ENCODE measurements at regions of chr11 and their contacts with region 1.

Region 1: DNA sequence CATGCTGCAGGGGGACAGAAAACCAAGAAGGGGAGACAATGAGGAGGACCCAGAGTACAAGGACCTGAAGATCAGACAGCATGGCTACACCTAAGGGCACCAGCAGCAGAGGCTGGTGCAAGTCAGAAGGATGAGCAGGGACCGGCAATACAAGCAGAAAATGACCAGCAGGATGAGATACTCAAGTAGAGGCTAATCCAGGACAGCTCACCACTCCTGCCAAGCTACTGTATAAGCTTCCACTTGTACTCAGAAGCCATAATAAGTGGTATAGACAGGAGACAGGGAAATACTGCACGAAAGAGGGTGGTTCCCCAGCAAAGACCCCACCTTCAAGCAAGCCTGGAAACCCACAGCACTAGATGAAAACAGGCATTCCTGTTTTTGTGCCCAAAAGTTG is 138.7 kb upstream of the ZC3H12C start:
- DNase-seq: no peak
- H3K4me3 ChIP-seq: no peak overlapping the region
- H3K27ac ChIP-seq: no peak overlapping the region
- H3K4me1 ChIP-seq: no peaks in the 10 kb centered on the region
- H3K27me3 ChIP-seq: no peaks in the 10 kb centered on the region
- CTCF ChIP-seq: no peak

Region 2: DNA sequence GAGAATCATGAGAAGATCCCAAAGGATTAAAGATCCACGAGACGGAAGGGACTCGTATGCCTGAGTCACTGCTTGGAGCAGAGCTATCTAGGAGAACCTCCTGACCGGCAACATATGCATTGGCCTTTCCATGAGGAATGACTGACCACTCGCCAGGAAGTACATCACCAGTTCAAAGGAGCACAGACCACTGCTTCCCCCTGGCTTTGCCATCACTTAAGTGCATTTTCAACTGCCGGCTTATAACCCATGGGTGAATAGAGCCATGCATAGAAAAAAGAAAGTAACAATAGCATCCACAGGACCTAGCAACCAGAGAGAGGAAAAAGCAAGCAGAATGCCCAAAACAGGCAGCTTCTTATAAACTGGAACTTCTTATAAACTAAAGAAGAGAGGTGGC is 40.4 kb after region 1 on chr11:
- CTCF ChIA-PET with region 1: no interaction called
- dilution Hi-C with region 1: loop called (anchors 5 kb)
- in situ Hi-C with region 1: no loop called
- intact Hi-C with region 1: no loop called
- DNase-seq: no peak
- H3K4me3 ChIP-seq: no peak overlapping the region
- H3K27ac ChIP-seq: no peak overlapping the region
- H3K4me1 ChIP-seq: no peaks in the 10 kb centered on the region
- H3K27me3 ChIP-seq: no peaks in the 10 kb centered on the region
- CTCF ChIP-seq: no peak

Region 3: DNA sequence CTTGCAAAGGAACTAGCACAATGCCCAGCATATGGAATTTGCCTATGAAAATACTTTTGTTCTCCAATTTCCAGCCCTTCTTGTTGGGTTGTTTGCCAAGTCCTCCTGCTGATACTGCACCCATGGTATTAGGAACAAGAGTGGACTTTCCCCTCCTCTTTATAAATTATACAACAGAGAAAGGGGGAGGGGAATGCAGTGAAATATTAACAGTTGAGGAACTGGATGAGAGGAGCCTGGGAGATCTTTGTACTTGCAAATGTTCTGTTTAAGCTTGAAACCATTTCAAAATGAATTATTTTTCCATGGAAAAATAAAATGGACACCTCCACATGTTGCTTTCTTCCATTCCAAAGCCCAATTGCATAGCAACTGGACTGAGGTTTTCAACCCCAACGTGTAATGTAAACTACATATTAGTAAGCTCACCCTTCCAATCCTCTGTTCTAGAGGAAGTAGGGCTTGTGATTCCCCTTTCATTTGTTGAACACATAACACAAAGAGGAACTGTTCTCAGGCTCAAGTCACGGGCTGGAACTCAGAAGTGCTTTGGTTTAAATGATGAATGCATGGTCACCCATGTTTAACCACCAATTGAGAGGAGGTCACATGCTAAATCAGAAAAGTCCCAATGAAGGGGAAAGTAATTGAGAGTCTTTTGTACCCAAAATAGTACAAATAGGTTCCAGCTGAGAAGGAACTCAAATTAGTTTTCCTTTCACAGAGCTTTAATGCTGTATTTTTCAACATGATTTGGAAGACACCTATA is 72.5 kb after region 1 on chr11:
- CTCF ChIA-PET with region 1: no interaction called
- dilution Hi-C with region 1: loop called (anchors 5 kb)
- in situ Hi-C with region 1: no loop called
- intact Hi-C with region 1: no loop called
- DNase-seq: no peak
- H3K4me3 ChIP-seq: no peak overlapping the region
- H3K27ac ChIP-seq: no peak overlapping the region
- H3K4me1 ChIP-seq: peaks cover 16% of the 10 kb centered on the region
- H3K27me3 ChIP-seq: no peaks in the 10 kb centered on the region
- CTCF ChIP-seq: no peak

Region 4: DNA sequence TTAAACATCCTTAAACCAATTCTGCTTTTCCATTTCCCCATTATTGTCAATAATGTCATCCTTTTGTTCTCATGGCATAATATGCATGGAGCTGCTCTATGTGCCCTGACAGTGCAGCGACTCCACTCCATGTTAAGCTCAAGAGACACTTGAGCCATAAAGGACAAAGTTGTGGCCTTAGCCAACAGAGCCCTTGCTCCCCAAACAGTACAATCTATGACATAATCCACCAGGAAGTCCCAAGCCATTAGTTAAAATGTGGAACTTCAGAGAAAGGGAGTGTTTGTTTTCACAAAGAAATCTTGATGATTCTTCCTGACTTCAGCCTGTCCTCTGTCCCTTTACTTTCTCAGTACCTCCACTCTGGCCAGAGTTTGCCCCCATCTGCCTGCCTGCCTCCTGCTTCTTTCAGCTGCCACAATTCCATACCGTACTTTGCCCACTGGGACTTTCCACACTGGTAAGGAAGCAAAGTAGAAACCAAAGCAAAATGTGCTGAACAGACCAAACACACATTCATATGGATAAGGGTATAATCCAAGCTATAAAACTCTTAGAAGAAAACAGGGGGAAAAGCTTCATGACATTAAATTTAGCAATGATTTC is 92.3 kb after region 1 on chr11:
- CTCF ChIA-PET with region 1: no interaction called
- dilution Hi-C with region 1: no loop called
- in situ Hi-C with region 1: no loop called
- intact Hi-C with region 1: no loop called
- DNase-seq: no peak
- H3K4me3 ChIP-seq: no peak overlapping the region
- H3K27ac ChIP-seq: no peak overlapping the region
- H3K4me1 ChIP-seq: no peaks in the 10 kb centered on the region
- H3K27me3 ChIP-seq: no peaks in the 10 kb centered on the region
- CTCF ChIP-seq: no peak